ENCODE measurements at regions of chr14 and their contacts with region 1.

Region 1: GRCh38 chr14:32252030-32252670 is 49.1 kb upstream of the RNU6-8 start:
- DNase-seq: peak; percentile 65 to 70 (median 69)
- H3K4me3 ChIP-seq: no peak overlapping the region
- H3K4me3 Mint-ChIP-seq: no peak overlapping the region
- H3K27ac ChIP-seq: no peak overlapping the region
- H3K27ac Mint-ChIP-seq: no peak overlapping the region
- H3K4me1 ChIP-seq: peaks cover 3% of the 10 kb centered on the region
- H3K4me1 Mint-ChIP-seq: no peaks in the 10 kb centered on the region
- H3K27me3 ChIP-seq: no peaks in the 10 kb centered on the region
- H3K27me3 Mint-ChIP-seq: no peaks in the 10 kb centered on the region

Region 2: GRCh38 chr14:31456841-31457664 is 795.1 kb before region 1 on chr14 and contains the start of gene DTD2:
- CTCF ChIA-PET with region 1: interaction called, 4 read pairs
- POLR2A ChIA-PET with region 1: no interaction called
- intact Hi-C with region 1: loop called (anchors 5 kb)
- DNase-seq: peak; percentile 87 to 88 (median 88)
- H3K4me3 ChIP-seq: peak within 1 kb of the TSS; percentile 53 to 69
- H3K4me3 Mint-ChIP-seq: peak within 1 kb of the TSS; percentile 96 to 99 (median 97)
- H3K27ac ChIP-seq: peak within 1 kb of the TSS; percentile 89
- H3K27ac Mint-ChIP-seq: peak within 1 kb of the TSS; percentile 86 to 98 (median 97)
- H3K4me1 ChIP-seq: peaks cover 13% of the 10 kb centered on the region
- H3K4me1 Mint-ChIP-seq: peaks cover 13 to 34% (median 26%) of the 10 kb centered on the region in 4 donors
- H3K27me3 ChIP-seq: no peaks in the 10 kb centered on the region
- H3K27me3 Mint-ChIP-seq: peaks cover 0 to 3% of the 10 kb centered on the region in 2 donors
- total RNA-seq, gene DTD2: 15.1 to 20.2 TPM

Region 3: GRCh38 chr14:31561155-31561846 is 690.8 kb before region 1 on chr14 and contains the start of gene NUBPL:
- CTCF ChIA-PET with region 1: no interaction called
- POLR2A ChIA-PET with region 1: no interaction called
- intact Hi-C with region 1: loop called (anchors 1 kb)
- DNase-seq: peak; percentile 96 to 98 (median 97)
- H3K4me3 ChIP-seq: peak within 1 kb of the TSS; percentile 94
- H3K4me3 Mint-ChIP-seq: peak within 1 kb of the TSS; percentile 94 to 98 (median 96)
- H3K27ac ChIP-seq: peak within 1 kb of the TSS; percentile 62
- H3K27ac Mint-ChIP-seq: peak within 1 kb of the TSS; percentile 94 to 99 (median 98)
- H3K4me1 ChIP-seq: peaks cover 17% of the 10 kb centered on the region
- H3K4me1 Mint-ChIP-seq: peaks cover 16 to 27% (median 21%) of the 10 kb centered on the region in 4 donors
- H3K27me3 ChIP-seq: no peaks in the 10 kb centered on the region
- H3K27me3 Mint-ChIP-seq: peaks cover 9 to 21% of the 10 kb centered on the region in 2 donors
- total RNA-seq, gene NUBPL: 7.4 to 7.5 TPM

Region 4: DNA sequence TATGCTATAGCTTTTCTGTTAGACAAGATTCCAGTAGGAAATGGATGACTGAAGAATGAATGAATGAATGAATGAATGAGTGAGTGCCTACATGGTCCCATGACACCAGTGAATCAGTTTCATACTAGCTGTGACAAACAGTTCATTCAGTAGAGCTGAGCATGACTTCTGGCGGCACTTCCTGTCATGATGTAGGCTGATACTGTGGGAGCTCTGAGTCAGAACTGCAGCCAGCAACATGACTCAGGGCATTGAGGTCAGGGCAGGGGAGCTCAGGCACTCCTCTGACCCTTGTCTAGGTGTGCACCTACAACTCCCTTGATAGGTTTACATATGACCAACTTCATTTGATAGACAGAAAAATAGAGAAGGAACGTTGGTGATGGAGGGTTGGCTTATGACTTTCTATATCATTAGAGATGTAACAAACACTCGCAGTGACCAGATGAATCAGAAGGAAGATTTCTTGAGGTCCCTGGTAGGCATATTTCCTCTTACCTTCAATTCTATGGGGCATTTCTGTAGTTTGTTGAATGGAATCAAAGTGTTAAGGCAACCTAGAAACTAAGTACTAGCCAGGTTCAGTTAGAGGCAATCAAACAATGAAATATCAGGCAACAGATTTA is 314.3 kb before region 1 on chr14:
- CTCF ChIA-PET with region 1: interaction called, 40 read pairs
- POLR2A ChIA-PET with region 1: interaction called, 3 read pairs
- intact Hi-C with region 1: loop called (anchors 1 kb)
- DNase-seq: peak; percentile 12 to 78 (median 20)
- H3K4me3 ChIP-seq: no peak overlapping the region
- H3K4me3 Mint-ChIP-seq: peak overlapping the region in 1 of 8 donors; percentile 2
- H3K27ac ChIP-seq: no peak overlapping the region
- H3K27ac Mint-ChIP-seq: peak overlapping the region; percentile 57 to 91 (median 80)
- H3K4me1 ChIP-seq: peaks cover 9% of the 10 kb centered on the region
- H3K4me1 Mint-ChIP-seq: peaks cover 11 to 17% (median 16%) of the 10 kb centered on the region in 4 donors
- H3K27me3 ChIP-seq: no peaks in the 10 kb centered on the region
- H3K27me3 Mint-ChIP-seq: no peaks in the 10 kb centered on the region

Region 5: DNA sequence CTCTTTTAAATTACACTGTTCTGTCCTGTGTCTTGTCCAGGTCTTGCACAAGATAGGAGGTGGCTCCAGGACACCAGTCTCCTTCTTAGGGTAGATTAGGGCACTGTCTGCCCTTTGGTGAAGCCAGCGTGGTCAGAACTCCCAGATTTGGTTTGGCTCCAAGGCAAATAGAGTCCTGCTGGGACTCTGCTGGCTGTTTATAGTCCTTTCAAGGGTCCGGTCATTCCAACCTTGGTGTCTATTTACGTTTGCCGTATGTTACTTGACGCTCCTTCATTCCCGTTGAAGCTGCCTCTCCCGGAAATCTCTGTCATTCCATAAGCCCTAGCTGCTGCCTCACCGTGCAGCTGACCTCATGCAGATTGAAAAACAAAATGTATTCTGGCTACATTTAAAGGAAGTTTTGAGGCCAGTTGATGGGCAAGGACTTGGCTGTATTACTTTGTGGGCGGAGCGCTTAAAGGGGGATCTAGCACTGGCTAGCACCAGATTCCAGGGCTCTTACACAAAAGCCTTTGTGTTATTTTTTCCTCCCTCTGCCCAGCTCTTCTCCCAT is 257.6 kb after region 1 on chr14:
- CTCF ChIA-PET with region 1: no interaction called
- POLR2A ChIA-PET with region 1: no interaction called
- intact Hi-C with region 1: no loop called
- DNase-seq: no peak
- H3K4me3 ChIP-seq: no peak overlapping the region
- H3K4me3 Mint-ChIP-seq: no peak overlapping the region
- H3K27ac ChIP-seq: no peak overlapping the region
- H3K27ac Mint-ChIP-seq: no peak overlapping the region
- H3K4me1 ChIP-seq: no peaks in the 10 kb centered on the region
- H3K4me1 Mint-ChIP-seq: no peaks in the 10 kb centered on the region
- H3K27me3 ChIP-seq: no peaks in the 10 kb centered on the region
- H3K27me3 Mint-ChIP-seq: peaks cover 0 to 2% of the 10 kb centered on the region in 2 donors

Region 6: DNA sequence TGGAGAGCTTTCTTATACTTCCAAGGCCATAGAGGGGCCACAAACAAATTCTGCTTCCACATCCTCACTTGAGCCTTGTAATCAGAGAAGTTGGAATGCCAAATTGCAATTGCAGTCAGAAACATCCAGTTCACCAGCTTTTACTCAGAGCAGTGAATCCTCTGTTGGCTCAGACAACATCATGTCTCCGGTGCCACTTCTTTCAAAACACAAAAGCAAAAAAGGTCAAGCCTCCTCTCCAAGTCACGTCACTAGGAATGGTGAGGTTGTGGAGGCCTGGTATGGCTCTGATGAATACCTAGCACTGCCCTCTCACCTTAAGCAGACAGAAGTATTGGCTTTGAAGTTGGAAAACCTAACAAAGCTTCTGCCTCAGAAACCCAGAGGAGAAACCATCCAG is 294.1 kb after region 1 on chr14:
- CTCF ChIA-PET with region 1: no interaction called
- POLR2A ChIA-PET with region 1: no interaction called
- intact Hi-C with region 1: no loop called
- DNase-seq: no peak
- H3K4me3 ChIP-seq: no peak overlapping the region
- H3K4me3 Mint-ChIP-seq: no peak overlapping the region
- H3K27ac ChIP-seq: no peak overlapping the region
- H3K27ac Mint-ChIP-seq: no peak overlapping the region
- H3K4me1 ChIP-seq: no peaks in the 10 kb centered on the region
- H3K4me1 Mint-ChIP-seq: no peaks in the 10 kb centered on the region
- H3K27me3 ChIP-seq: no peaks in the 10 kb centered on the region
- H3K27me3 Mint-ChIP-seq: peaks cover 0 to 1% of the 10 kb centered on the region in 2 donors

Region 7: DNA sequence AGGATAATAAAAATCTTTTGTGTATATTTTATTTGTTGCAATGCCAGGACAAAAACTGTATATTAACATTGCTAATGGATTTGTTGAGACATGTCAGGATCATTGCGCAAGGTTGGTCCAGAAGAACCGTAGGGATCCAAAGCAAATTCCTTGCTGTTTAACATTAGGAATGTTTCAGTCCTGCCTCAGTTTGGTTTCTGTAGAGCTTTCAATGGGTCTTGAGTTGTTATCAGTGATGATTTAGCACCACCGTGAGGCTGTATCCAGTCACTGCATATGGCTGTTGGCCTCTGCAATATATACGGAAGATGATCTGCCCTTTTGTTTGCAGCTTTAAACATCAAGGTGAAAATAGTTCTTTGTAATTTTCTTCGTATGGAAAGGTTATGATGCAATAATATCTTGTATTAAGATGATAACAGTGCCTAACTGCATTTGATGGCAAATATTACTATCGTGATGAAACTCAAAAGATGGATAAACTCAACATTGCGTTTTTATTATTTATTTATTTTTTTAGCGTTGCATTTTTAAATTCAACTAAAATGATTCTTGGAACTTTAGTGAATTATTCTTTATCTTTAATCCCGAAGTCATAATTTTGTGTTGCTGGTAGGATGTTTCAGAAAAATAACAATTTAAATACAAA is 308.2 kb after region 1 on chr14:
- CTCF ChIA-PET with region 1: no interaction called
- POLR2A ChIA-PET with region 1: no interaction called
- intact Hi-C with region 1: loop called (anchors 5 kb)
- DNase-seq: peak in 4 of 5 donors; percentile 12 to 26 (median 20)
- H3K4me3 ChIP-seq: no peak overlapping the region
- H3K4me3 Mint-ChIP-seq: no peak overlapping the region
- H3K27ac ChIP-seq: no peak overlapping the region
- H3K27ac Mint-ChIP-seq: no peak overlapping the region
- H3K4me1 ChIP-seq: peaks cover 11% of the 10 kb centered on the region
- H3K4me1 Mint-ChIP-seq: peaks cover 8 to 13% (median 13%) of the 10 kb centered on the region in 4 donors
- H3K27me3 ChIP-seq: no peaks in the 10 kb centered on the region
- H3K27me3 Mint-ChIP-seq: no peaks in the 10 kb centered on the region